Thyroid gland (tissue), 4 donors: ENCODE measurements at regions of chr9 and their contacts with region 1.

Region 1: GRCh38 chr9:77952642-77953328 is 78.8 kb downstream of the GNAQ start:
- DNase-seq: no peak
- H3K4me3 ChIP-seq: no peak overlapping the region
- H3K27ac ChIP-seq: peak overlapping the region; percentile 18 to 28 (median 21)
- H3K4me1 ChIP-seq: peaks cover 17 to 48% of the 10 kb centered on the region in 2 donors
- H3K27me3 ChIP-seq: no peaks in the 10 kb centered on the region
- CTCF ChIP-seq: no peak
- POLR2A ChIP-seq: no peak

Region 2: DNA sequence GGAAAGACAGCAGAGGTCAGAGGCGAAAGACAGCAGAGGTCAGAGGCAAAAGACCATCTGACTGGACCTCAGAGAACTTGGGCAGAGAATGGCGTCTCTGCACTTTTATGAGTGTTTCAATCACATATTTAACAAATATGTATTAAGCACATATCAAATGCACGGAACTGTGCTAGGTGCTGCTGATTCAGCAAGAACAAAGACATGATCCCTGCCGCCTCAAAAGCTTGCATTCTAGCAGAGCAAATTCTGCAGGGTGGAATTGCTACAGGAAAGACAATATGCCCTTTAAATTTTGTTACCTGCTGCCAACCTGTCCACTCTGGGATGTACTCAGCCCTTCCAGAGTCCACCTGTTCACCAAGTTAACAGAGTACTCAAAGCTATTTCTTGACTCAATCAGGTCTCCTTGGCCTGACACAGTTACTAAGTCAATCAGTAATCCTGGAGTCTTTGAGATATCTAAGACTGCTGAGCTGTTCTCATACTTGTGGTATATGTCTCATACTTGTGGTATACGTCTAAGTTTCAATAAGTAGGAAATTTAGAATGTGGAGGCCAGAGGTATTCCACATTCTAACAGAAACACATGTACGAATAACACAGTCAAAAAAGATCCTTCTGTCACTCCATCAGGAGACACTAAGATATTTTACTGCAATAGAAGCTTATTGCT is 53.0 kb before region 1 on chr9:
- intact Hi-C with region 1: loop called (anchors 10 kb)
- DNase-seq: no peak
- H3K4me3 ChIP-seq: no peak overlapping the region
- H3K27ac ChIP-seq: no peak overlapping the region
- H3K4me1 ChIP-seq: peaks cover 14% of the 10 kb centered on the region in 2 donors
- H3K27me3 ChIP-seq: no peaks in the 10 kb centered on the region
- CTCF ChIP-seq: no peak
- POLR2A ChIP-seq: no peak